Dendritic cell treated with granulocyte-macrophage colony-stimulating factor and Interleukin-4, amounts not matched to agents 40 ng/mL and 50 ng/mL, for 4 days (primary cell): ENCODE measurements at regions of chr9 and their contacts with region 1.

Region 1: DNA sequence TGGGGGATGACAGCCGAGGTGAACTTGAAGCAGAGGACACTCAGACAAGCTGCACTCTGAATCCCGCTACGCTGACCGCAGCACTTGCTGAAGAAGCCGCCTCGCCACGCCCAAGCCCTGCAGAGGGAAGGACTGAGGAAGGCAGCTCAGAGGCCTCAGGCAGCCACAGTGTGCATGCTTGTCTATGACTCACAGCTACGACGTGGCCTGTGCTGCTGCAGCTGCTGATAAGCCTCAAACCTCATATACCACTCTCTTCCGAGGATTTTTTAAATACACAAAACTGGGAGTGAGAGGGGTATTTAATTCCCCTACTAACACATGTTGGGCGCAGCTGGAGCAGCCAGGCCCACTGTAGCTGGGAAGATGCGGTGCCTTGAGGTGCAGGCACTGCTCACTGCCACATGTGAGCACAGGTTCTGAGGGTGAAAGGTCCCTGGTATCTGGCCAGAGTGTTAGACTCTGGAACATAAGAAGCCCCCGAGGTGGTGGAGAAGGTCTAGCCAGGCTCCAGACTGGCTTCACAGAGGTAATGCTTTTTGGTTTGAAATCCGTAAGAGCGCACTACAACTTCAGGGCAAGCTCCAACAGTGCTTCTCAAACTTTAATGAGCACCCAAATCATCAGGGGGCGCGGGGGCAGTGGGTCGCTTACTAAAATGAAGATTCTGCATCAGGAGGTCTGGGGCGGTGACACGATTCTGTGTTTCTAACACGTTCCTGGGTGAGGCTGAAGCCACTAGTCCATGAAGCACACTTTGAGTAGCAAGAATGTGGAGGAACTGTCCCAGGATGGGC is 196.8 kb downstream of the AUH start:
- H3K4me3 Mint-ChIP-seq: peak overlapping the region; percentile 27
- H3K27ac Mint-ChIP-seq: peak overlapping the region; percentile 99
- H3K4me1 Mint-ChIP-seq: peaks cover 60% of the 10 kb centered on the region
- H3K27me3 Mint-ChIP-seq: no peaks in the 10 kb centered on the region

Region 2: GRCh38 chr9:91150998-91151717 is 13.8 kb before region 1 on chr9:
- intact Hi-C with region 1: loop called (anchors 2 kb)
- H3K4me3 Mint-ChIP-seq: no peak overlapping the region
- H3K27ac Mint-ChIP-seq: peak overlapping the region; percentile 93
- H3K4me1 Mint-ChIP-seq: peaks cover 71% of the 10 kb centered on the region
- H3K27me3 Mint-ChIP-seq: no peaks in the 10 kb centered on the region

Region 3: GRCh38 chr9:91199739-91200497 is 35.0 kb after region 1 on chr9:
- intact Hi-C with region 1: no loop called
- H3K4me3 Mint-ChIP-seq: peak overlapping the region; percentile 13
- H3K27ac Mint-ChIP-seq: peak overlapping the region; percentile 100
- H3K4me1 Mint-ChIP-seq: peaks cover 62% of the 10 kb centered on the region
- H3K27me3 Mint-ChIP-seq: no peaks in the 10 kb centered on the region

Region 4: GRCh38 chr9:91346652-91347051 is 181.7 kb after region 1 on chr9:
- intact Hi-C with region 1: loop called (anchors 5 kb)
- H3K4me3 Mint-ChIP-seq: no peak overlapping the region
- H3K27ac Mint-ChIP-seq: peak overlapping the region; percentile 57
- H3K4me1 Mint-ChIP-seq: peaks cover 46% of the 10 kb centered on the region
- H3K27me3 Mint-ChIP-seq: no peaks in the 10 kb centered on the region